ENCODE measurements at regions of chr2 and their contacts with region 1.

Region 1: GRCh38 chr2:213021971-213022899 is 129.2 kb downstream of the IKZF2 start:
- DNase-seq: peak; percentile 28
- CTCF ChIP-seq: no peak

Region 2: DNA sequence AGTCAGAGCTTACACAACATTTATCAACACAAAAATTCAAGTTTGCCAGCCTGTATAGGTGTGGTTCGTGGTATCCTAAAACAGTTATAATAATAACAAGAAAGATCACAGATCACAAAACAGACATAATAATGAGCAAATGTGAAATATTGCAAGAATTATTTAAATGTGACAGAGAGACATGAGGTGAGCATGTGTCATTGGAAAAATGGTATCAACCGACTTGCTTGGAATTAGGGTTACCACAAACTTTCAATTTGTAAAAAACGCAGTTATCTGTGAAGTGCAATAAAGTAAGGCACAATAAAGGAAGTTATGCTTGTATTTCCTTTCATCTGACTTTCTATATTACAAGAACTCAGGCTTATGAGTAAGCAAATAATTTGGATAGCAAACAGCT is 12.3 kb after region 1 on chr2:
- CTCF ChIA-PET with region 1: interaction called, 12 read pairs
- POLR2A ChIA-PET with region 1: no interaction called
- DNase-seq: no peak
- CTCF ChIP-seq: no peak

Region 3: DNA sequence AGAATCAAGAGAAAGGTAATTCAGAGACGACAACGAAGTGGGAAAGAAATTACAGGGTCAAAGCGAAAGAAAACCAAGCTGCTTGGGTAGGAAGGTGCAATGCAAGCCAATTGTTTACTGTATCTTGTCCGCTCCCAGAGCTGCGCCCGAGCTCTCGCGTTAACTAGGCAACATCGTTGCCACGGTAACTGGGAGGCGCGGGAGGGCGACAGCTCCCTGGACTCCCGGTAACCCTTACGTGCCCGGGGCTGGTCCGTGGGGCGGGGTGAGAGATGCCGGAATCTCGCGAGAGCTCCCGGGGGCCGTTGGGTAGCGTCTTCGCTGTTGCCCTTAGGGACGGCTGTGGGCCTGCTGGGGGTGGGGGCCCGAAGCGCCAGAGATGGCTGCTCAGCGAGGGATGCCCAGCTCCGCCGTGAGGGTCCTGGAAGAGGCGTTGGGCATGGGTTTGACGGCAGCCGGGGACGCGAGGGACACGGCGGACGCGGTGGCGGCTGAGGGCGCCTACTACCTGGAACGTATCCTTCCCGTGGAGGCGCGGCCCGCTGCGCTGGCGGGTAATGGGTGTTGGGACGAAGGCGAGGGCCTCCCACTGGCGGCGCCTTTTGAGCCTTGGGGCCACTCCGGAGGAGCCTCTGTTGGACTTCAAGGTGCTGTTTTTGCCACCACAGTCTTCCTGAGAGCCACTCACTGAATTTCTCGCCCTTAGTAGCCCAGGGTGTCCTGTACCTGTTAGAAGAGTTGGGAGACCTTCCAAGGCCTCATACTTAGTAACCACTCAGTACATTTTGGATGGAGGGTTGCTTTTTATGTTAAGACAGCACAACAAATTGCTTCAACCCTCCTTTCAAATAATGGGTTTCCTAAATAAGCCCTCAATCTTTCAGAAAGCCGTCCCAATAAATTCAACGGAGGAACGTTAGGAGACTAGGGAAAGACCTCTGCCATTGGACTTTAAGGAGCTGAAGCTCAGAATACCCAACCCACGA is 262.2 kb after region 1 on chr2 and contains the start of gene SPAG16:
- CTCF ChIA-PET with region 1: no interaction called
- POLR2A ChIA-PET with region 1: no interaction called
- DNase-seq: peak; percentile 99
- CTCF ChIP-seq: no peak